Aorta (tissue), 5 donors: ENCODE measurements at regions of chr6 and their contacts with region 1.

Region 1: DNA sequence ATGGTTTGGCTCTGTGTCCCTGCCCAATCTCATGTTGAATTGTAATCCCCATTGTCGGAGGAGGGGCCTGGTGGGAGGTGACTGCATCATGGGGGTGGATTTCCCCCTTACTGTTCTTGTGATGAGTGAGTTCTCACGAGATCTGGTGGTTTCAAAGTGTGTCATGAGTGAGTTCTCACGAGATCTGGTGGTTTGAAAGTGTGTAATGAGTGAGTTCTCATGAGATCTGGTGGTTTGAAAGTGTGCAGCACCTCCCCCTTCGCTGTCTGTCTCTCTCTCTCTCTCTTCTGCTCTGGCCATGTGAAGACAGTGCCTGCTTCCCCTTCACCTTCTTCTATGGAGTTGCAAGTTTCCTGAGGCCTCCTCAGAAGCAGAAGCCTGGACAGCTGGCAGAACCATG is 87.6 kb downstream of the MYLK4 start:
- DNase-seq: no peak
- ATAC-seq: no peak
- H3K4me3 ChIP-seq: no peak overlapping the region
- H3K27ac ChIP-seq: no peak overlapping the region
- H3K4me1 ChIP-seq: no peaks in the 10 kb centered on the region
- H3K27me3 ChIP-seq: no peaks in the 10 kb centered on the region

Region 2: DNA sequence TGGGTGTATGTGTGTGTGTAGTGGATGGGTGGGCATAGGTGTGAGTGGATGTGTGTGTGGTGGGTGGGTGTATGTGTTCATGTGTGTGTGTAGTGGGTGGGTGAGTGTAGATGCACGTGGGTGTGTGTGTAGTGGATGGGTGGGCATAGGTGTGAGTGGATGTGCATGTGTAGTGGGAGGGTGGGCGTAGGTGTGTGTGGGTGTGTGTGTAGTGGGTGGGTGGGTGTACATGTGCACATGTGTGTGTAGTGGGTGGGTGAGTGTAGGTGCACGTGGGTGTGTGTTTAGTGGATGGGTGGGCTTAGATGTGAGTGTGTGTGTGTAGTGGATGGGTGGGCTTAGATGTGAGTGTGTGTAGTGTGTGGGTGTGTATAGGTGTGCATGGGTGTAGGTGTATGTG is 16.8 kb before region 1 on chr6:
- intact Hi-C with region 1: loop called in 1 of 2 experiments (anchors 1 kb)
- DNase-seq: no peak
- ATAC-seq: no peak
- H3K4me3 ChIP-seq: no peak overlapping the region
- H3K27ac ChIP-seq: no peak overlapping the region
- H3K4me1 ChIP-seq: peaks cover 0 to 2% of the 10 kb centered on the region in 2 donors
- H3K27me3 ChIP-seq: no peaks in the 10 kb centered on the region

Region 3: GRCh38 chr6:2862712-2863181 is 199.6 kb after region 1 on chr6:
- intact Hi-C with region 1: no loop called
- DNase-seq: no peak
- ATAC-seq: no peak
- H3K4me3 ChIP-seq: no peak overlapping the region
- H3K27ac ChIP-seq: no peak overlapping the region
- H3K4me1 ChIP-seq: no peaks in the 10 kb centered on the region
- H3K27me3 ChIP-seq: no peaks in the 10 kb centered on the region